Activated T-helper 1 cell treated with anti-CD3 and anti-CD28 coated beads, Interleukin-12 subunit alpha, Interleukin-12 subunit beta, Interleukin-2, Interleukin-4 antibody, amounts not matched to agents 30 ng/mL and 10 ng/mL and 1 ng/mL, durations not matched to agents 14 hours and 24 hours and 36 hours (primary cell): ENCODE measurements at regions of chr20 and their contacts with region 1.

Region 1: DNA sequence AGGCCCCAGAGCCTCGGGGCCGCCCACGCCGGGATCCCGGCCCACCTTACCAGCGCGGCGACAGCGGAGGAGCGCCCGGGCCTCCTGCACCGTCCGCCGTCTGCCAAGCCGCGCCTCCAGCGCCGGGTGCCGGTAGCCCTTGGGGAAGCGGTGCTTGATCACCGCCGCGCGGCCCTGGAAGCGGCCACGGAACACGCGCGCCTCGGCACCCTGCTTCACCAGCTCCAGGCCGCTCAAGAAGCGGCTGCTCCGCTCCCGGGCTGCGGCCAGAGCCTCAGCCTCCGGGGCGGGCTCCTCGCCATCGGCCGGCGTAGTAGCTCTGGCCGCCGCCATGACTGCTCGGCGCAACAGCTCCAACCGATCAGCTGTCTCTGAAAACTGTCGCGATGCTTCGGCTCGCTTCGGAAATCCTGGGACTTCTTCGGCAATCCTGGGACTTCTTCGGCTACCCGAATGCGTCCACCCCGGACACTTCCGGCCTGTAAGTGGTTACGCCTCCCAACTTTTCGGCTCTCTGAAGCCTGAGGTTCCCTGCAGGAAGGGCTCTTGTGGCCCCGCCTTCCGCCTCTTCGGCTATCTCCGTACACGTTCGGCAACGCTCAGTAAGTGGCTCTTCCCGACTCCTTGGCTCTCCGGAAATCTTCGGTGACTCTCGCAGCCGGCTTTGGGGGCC is at the start of gene TP53RK:
- DNase-seq: peak; percentile 94
- H3K4me3 Mint-ChIP-seq: peak within 1 kb of the TSS; percentile 88
- H3K27ac Mint-ChIP-seq: peak within 1 kb of the TSS; percentile 91
- H3K4me1 Mint-ChIP-seq: peaks cover 52% of the 10 kb centered on the region
- H3K27me3 Mint-ChIP-seq: peaks cover 3% of the 10 kb centered on the region
- total RNA-seq, gene TP53RK: 16.8 and 18.5 TPM in 2 replicates

Region 2: GRCh38 chr20:46363800-46364634 is 325.2 kb before region 1 on chr20:
- intact Hi-C with region 1: loop called (anchors 1 kb)
- DNase-seq: peak; percentile 82
- H3K4me3 Mint-ChIP-seq: peak overlapping the region; percentile 93
- H3K27ac Mint-ChIP-seq: peak overlapping the region; percentile 82
- H3K4me1 Mint-ChIP-seq: peaks cover 66% of the 10 kb centered on the region
- H3K27me3 Mint-ChIP-seq: no peaks in the 10 kb centered on the region

Region 3: DNA sequence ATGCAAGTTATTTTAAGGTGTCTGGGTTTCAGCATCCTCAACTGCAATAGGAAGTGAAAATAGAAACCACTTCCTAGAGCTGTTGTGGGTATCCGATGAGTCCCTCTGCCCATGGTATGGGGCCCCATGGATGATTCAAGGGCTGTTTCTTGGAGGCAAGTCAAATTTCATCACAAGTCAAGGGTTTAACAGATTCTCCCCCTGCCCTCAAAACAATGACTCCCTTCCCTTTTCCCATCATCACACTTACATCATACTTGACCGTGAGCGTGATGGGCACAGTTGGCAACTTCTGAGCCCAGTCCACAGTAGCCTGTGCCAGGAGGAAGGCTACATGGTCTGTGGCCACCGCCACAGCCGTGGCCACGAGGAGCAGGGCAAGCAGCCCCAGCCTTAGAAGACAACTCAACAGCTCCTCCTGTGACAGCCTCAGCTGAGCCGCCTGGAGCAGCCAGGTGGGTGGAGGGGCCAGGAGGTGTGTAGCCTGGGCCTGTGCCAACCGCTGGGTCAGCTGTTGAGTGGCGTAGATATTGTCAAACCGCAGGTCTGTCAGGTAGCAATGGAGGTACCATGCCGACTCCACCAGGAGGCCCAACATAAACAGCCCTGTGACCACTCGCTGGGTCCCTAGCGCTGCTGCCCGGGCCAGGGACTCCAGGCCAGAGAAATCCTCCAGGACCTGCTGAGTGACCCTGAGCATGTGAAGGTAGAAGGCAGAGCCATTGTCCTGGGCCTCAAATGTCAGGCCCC is 144.0 kb before region 1 on chr20:
- intact Hi-C with region 1: loop called (anchors 2 kb)
- DNase-seq: peak; percentile 41
- H3K4me3 Mint-ChIP-seq: peak overlapping the region; percentile 68
- H3K27ac Mint-ChIP-seq: peak overlapping the region; percentile 96
- H3K4me1 Mint-ChIP-seq: peaks cover 11% of the 10 kb centered on the region
- H3K27me3 Mint-ChIP-seq: peaks cover 5% of the 10 kb centered on the region

Region 4: DNA sequence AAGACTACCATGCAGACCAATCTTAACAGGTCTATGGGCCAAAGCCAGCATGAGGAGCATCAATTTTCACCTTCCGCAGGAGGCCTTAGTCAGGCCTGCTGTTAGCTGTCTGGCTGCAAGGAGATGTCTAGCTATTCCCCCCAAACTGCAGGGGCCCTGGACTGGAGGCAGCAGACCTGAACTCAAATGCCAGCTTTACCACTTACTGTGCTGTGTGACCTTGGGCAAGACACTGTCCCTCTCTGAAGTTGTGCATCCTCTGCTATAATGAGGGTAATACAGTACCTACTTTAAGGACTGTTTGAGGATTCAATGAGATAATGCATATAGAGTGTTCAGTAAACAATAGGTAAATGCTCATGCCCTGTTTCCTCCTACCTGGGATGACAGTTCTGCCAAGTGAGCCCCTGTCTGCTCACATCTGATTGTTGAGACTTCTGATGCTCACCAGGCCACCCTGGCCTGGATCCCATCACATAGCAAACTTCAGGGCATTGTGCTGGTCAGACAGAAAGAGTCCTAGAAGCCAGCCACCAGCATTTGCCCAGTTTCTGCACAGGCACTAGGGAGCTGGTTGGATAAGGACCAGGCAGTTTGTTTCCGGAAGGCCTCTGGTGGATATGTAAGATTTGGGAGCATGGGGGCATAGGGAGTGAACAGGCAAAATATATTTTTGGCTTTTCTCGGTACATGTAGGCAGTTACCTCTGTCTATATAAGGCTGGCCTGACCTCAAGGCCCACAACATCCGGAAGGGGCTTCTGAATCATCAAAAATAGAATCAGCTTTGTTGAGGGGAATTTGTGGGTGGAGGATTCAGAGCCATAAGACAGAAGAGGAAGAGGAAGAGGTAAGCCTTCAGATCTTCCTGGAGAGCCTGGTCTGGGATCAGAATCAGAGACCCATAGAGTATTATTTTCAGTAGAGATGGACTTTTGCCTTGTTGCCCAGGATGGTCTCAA is 136.5 kb before region 1 on chr20:
- intact Hi-C with region 1: loop called (anchors 1 kb)
- DNase-seq: peak; percentile 61
- H3K4me3 Mint-ChIP-seq: peak overlapping the region; percentile 35
- H3K27ac Mint-ChIP-seq: peak overlapping the region; percentile 91
- H3K4me1 Mint-ChIP-seq: peaks cover 68% of the 10 kb centered on the region
- H3K27me3 Mint-ChIP-seq: no peaks in the 10 kb centered on the region

Region 5: DNA sequence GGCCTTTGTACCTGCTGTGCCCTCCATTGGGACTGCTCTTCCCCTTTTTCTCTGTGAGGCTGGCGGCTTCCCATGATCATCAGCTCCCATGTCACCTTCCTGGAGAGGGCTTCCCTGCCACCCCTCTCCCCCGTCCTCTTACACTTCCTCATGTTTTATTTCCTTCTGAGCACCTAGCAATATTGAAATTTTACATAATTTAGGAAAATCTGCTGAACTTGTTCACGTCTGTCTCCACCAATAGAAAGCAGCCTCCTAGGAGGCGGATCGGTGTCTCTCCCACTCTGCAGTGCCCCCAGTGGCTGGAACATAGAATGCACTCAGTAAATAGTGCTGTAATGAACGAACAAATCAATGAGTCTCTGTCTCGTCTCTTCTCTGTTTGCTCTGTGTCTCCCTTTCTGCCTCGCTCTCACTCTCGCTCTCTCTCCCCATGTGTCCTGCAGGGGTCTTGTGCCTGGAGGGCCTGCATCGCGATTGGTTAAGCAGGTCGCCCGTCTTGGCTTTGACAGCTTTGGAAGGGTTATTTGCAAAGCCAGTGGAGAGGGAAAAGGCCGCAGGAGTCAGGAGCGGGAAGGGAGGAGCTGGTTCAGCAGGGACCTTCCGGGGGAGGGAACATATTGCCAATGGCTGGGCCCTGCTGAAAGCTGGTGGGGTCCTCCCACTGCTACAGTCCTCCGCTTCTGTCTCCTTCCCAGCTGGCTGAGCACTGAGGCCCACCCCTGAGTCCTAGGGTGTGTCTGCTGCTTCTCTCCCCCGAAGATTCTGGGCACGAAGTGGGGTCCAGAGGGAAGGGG is 126.6 kb before region 1 on chr20:
- intact Hi-C with region 1: loop called (anchors 1 kb)
- DNase-seq: peak; percentile 53
- H3K4me3 Mint-ChIP-seq: no peak overlapping the region
- H3K27ac Mint-ChIP-seq: no peak overlapping the region
- H3K4me1 Mint-ChIP-seq: peaks cover 36% of the 10 kb centered on the region
- H3K27me3 Mint-ChIP-seq: peaks cover 6% of the 10 kb centered on the region

Region 6: DNA sequence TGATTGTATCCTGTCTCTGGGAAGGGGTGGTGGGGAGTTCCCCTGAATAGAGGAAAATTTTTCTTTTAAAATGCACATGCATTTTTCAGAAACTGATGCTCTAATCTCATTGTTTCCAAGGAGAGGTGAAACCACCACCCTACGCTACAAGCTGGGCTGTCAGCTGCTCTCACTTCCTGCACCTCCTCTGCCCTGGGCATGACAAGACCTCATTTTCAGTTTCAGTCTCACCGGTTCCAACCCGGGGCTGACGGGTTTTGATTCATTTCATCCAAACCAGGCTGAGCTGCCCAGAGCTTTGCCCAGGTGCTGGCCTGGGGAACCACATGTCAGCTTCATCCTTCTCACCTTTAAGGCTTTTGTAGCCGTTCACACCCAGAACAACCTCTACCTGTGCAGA is 305.1 kb after region 1 on chr20:
- intact Hi-C with region 1: loop called (anchors 5 kb)
- DNase-seq: peak; percentile 74
- H3K4me3 Mint-ChIP-seq: peak overlapping the region; percentile 64
- H3K27ac Mint-ChIP-seq: peak overlapping the region; percentile 90
- H3K4me1 Mint-ChIP-seq: peaks cover 80% of the 10 kb centered on the region
- H3K27me3 Mint-ChIP-seq: peaks cover 6% of the 10 kb centered on the region

Region 7: GRCh38 chr20:47356526-47357295 is 667.5 kb after region 1 on chr20 and contains the start of gene ZMYND8:
- intact Hi-C with region 1: loop called (anchors 2 kb)
- DNase-seq: peak; percentile 96
- H3K4me3 Mint-ChIP-seq: peak within 1 kb of the TSS; percentile 92
- H3K27ac Mint-ChIP-seq: peak within 1 kb of the TSS; percentile 99
- H3K4me1 Mint-ChIP-seq: no peaks in the 10 kb centered on the region
- H3K27me3 Mint-ChIP-seq: no peaks in the 10 kb centered on the region
- total RNA-seq, gene ZMYND8: 42.6 and 43.3 TPM in 2 replicates